Activated T-helper 2 cell treated with anti-CD3 and anti-CD28 coated beads, Interferon-gamma antibody, Interleukin-2, Interleukin-4, amounts not matched to agents 10 μg/mL and 5 μg/mL and 100 μg/mL, durations not matched to agents 14 hours and 24 hours and 36 hours (primary cell): ENCODE measurements at regions of chr14 and their contacts with region 1.

Region 1: DNA sequence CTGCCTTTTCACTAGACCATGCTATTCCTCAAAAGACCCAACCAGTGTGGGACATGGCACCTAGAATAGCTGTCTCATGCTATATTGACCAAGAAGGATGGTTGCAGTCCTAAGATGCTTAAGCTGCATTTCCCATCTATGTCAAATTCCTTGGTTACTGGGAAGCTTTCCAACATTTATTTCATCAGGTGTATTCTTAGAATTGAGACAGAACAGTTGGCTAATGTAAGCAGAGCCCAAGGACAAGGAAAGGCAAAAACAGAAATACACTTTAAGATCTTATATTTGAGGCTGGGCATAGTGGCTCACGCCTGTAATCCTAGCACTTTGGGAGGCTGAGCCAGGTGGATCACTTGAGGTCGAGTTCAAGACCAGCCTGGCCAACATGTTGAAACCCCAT is 24.7 kb downstream of the ARG2 start:
- DNase-seq: no peak
- H3K4me3 Mint-ChIP-seq: no peak overlapping the region
- H3K27ac Mint-ChIP-seq: no peak overlapping the region
- H3K4me1 Mint-ChIP-seq: peaks cover 35% of the 10 kb centered on the region
- H3K27me3 Mint-ChIP-seq: no peaks in the 10 kb centered on the region

Region 2: GRCh38 chr14:67666750-67667449 is 22.5 kb after region 1 on chr14:
- intact Hi-C with region 1: loop called (anchors 2 kb)
- DNase-seq: no peak
- H3K4me3 Mint-ChIP-seq: no peak overlapping the region
- H3K27ac Mint-ChIP-seq: peak overlapping the region; percentile 43
- H3K4me1 Mint-ChIP-seq: peaks cover 27% of the 10 kb centered on the region
- H3K27me3 Mint-ChIP-seq: no peaks in the 10 kb centered on the region

Region 3: DNA sequence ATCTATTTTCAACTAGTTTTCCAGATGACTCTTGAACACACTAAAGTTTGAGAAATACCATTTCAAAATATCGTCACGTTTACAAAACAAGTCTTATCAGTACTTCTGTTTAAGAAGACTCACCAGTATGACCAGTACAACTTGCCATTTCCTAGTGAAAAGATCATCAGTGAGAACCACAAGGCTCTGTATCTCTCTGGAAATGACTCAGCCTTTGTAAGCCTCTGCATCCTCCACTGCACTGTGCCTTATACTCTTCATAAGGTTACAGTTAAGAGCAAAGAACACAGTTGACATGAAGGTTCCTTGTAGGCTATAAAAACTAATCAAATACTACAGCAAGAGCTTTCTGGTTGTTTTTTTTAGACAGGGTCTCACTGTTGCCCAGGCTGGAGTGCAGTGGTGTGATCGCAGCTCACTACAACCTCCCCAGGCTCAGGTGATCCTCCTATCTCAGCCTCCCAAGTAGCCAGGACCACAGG is 35.7 kb after region 1 on chr14:
- intact Hi-C with region 1: loop called (anchors 1 kb)
- DNase-seq: peak; percentile 34
- H3K4me3 Mint-ChIP-seq: peak overlapping the region; percentile 7
- H3K27ac Mint-ChIP-seq: peak overlapping the region; percentile 83
- H3K4me1 Mint-ChIP-seq: peaks cover 45% of the 10 kb centered on the region
- H3K27me3 Mint-ChIP-seq: no peaks in the 10 kb centered on the region

Region 4: GRCh38 chr14:68283378-68284123 is 639.1 kb after region 1 on chr14:
- intact Hi-C with region 1: no loop called
- DNase-seq: peak; percentile 33
- H3K4me3 Mint-ChIP-seq: no peak overlapping the region
- H3K27ac Mint-ChIP-seq: peak overlapping the region; percentile 59
- H3K4me1 Mint-ChIP-seq: peaks cover 55% of the 10 kb centered on the region
- H3K27me3 Mint-ChIP-seq: no peaks in the 10 kb centered on the region